Aorta (tissue), 5 donors: ENCODE measurements at regions of chr2 and their contacts with region 1.

Region 1: DNA sequence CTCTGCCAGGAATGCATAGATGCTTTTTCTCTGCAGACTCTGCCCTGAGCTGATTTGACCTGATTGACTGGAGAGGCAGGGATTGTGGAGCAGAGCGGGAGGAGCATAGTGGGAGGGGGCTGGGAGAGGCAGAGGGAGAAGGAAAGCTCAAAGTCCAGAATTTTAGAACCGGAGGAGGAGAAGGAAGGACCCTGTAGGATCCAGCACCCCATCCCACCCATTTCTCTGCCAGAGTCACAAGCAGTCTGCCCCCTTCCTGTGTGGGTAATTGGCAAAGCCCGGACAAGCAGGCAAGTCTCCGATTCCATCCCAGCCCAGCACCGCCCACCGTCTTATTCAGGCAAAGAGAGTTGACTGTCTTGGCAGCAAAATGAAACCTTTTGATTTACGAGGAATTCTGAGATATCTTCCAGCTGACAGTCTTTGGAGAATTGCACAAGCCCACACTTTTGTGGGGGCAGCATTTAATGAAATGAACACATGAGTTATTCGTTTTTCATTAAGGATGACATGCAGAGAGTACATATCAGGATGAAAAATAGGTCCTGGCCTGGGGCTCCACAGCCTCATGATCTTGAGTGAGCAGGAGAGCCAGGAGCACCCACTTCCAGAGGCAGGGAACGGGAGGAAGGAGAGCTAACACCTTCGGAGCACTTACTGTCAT is 103.1 kb downstream of the MCFD2 start:
- DNase-seq: peak; percentile 89 to 90
- ATAC-seq: peak; percentile 69
- H3K4me3 ChIP-seq: no peak overlapping the region
- H3K27ac ChIP-seq: no peak overlapping the region
- H3K4me1 ChIP-seq: peaks cover 3 to 13% of the 10 kb centered on the region in 2 donors
- H3K27me3 ChIP-seq: no peaks in the 10 kb centered on the region

Region 2: GRCh38 chr2:46876741-46877384 is 64.4 kb after region 1 on chr2:
- intact Hi-C with region 1: loop called (anchors 2 to 5 kb)
- DNase-seq: no peak
- ATAC-seq: peak; percentile 19
- H3K4me3 ChIP-seq: no peak overlapping the region
- H3K27ac ChIP-seq: no peak overlapping the region
- H3K4me1 ChIP-seq: no peaks in the 10 kb centered on the region
- H3K27me3 ChIP-seq: no peaks in the 10 kb centered on the region

Region 3: GRCh38 chr2:46967990-46968647 is 155.6 kb after region 1 on chr2:
- intact Hi-C with region 1: no loop called
- DNase-seq: peak; percentile 93
- ATAC-seq: peak; percentile 92
- H3K4me3 ChIP-seq: no peak overlapping the region
- H3K27ac ChIP-seq: peak overlapping the region; percentile 47 to 92
- H3K4me1 ChIP-seq: peaks cover 4 to 6% of the 10 kb centered on the region in 2 donors
- H3K27me3 ChIP-seq: no peaks in the 10 kb centered on the region